Heart right ventricle (tissue), 16 donors: ENCODE measurements at regions of chr4 and their contacts with region 1.

Region 1: GRCh38 chr4:173538148-173538908 is 8.3 kb upstream of the HAND2 start:
- DNase-seq: peak; percentile 54 to 74
- ATAC-seq: peak; percentile 76 to 87 (median 80)
- H3K4me3 ChIP-seq: peak overlapping the region; percentile 17 to 82 (median 54)
- H3K27ac ChIP-seq: peak overlapping the region; percentile 72 to 97 (median 90)
- H3K4me1 ChIP-seq: peaks cover 0 to 61% (median 13%) of the 10 kb centered on the region in 9 donors
- H3K27me3 ChIP-seq: peaks cover 0 to 99% (median 48%) of the 10 kb centered on the region in 7 donors
- CTCF ChIP-seq: no peak

Region 2: DNA sequence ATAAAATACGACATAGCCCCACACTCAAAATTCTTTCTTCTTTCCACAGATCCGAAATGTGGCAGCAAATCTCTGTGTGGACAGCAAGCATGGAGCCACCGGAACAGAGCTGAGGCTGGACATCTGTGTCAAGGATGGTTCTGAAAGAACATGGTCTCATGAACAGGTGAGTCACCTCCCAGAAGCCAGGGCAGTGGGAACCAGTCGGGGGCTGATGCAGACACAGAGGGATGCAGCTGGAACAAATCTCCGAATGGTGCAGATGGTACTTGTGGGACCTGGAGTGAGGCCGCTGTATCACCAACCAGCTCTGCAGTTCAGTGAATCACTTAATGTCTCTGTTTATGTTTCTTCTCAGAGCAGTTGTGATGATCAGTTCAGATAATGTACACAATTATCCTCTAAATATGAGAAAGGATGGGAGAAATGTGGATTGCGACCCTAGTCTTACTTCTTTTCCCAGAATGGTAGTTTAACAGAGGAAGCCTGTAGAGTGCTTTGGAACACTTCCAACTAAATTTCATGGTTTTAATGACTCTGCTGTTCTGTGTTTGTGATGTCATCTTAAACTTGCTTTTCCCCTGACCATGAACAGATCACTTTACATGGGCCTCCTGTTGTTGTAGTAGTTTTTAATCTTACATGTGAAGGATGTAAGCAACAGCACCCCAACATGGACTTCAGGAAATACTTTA is 529.1 kb before region 1 on chr4:
- intact Hi-C with region 1: no loop called
- DNase-seq: no peak
- ATAC-seq: no peak
- H3K4me3 ChIP-seq: no peak overlapping the region
- H3K27ac ChIP-seq: no peak overlapping the region
- H3K4me1 ChIP-seq: peaks cover 0 to 8% (median 0%) of the 10 kb centered on the region in 9 donors
- H3K27me3 ChIP-seq: no peaks in the 10 kb centered on the region
- CTCF ChIP-seq: no peak

Region 3: DNA sequence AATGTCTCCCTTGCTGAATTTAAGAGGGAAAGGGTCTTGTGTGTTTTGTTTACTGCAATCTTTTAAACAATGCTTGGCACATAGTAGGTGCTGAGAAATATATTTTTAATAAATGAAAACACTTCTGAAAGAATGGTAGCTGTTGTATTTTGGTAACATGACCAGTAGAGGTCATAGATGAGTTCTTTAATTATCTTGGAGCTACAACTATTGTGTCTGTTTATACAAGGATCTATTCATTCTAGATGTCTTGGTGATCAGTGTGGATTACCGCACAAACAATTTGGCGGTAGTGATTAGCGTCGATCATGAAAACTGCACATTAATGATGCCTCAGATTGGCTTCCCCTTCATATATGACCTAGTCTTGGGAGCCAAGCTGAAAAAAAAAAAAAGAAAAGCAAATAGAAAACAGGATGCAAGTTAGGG is 118.0 kb before region 1 on chr4:
- intact Hi-C with region 1: no loop called
- DNase-seq: no peak
- ATAC-seq: peak in 3 of 8 donors; percentile 21 to 56 (median 50)
- H3K4me3 ChIP-seq: peak overlapping the region in 1 of 10 donors; percentile 21
- H3K27ac ChIP-seq: no peak overlapping the region
- H3K4me1 ChIP-seq: peaks cover 0 to 42% (median 0%) of the 10 kb centered on the region in 9 donors
- H3K27me3 ChIP-seq: no peaks in the 10 kb centered on the region
- CTCF ChIP-seq: peak in 8 of 9 donors; percentile 42 to 69 (median 60)

Region 4: GRCh38 chr4:173478201-173478912 is 60.0 kb before region 1 on chr4:
- intact Hi-C with region 1: no loop called
- DNase-seq: no peak
- ATAC-seq: peak in 3 of 8 donors; percentile 46 to 62 (median 56)
- H3K4me3 ChIP-seq: no peak overlapping the region
- H3K27ac ChIP-seq: peak overlapping the region in 2 of 10 donors; percentile 7 to 28
- H3K4me1 ChIP-seq: no peaks in the 10 kb centered on the region
- H3K27me3 ChIP-seq: no peaks in the 10 kb centered on the region
- CTCF ChIP-seq: no peak

Region 5: DNA sequence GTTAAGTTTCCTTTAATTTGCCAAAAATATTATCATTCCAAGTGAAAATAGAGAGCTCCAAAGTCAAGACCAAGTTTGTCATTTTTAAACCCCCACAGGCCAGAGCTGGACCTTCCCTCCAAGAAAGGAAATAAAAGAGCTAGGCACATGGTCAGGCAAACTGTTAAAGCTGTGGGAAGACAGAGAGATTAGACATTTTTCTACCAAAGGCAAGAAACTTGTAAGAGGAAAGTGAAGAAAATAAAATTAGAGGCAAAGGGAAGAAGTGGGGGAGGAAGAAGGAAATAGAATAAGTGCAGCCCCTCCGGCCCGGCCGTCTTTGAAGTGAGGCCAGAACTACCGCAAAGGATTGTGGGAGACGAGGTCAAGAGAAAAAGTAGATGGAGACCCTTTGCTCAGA is 39.6 kb after region 1 on chr4:
- intact Hi-C with region 1: loop called in 1 of 10 experiments (anchors 5 kb)
- DNase-seq: no peak
- ATAC-seq: no peak
- H3K4me3 ChIP-seq: no peak overlapping the region
- H3K27ac ChIP-seq: peak overlapping the region in 5 of 10 donors; percentile 7 to 51 (median 33)
- H3K4me1 ChIP-seq: peaks cover 0 to 32% (median 1%) of the 10 kb centered on the region in 9 donors
- H3K27me3 ChIP-seq: no peaks in the 10 kb centered on the region
- CTCF ChIP-seq: no peak

Region 6: DNA sequence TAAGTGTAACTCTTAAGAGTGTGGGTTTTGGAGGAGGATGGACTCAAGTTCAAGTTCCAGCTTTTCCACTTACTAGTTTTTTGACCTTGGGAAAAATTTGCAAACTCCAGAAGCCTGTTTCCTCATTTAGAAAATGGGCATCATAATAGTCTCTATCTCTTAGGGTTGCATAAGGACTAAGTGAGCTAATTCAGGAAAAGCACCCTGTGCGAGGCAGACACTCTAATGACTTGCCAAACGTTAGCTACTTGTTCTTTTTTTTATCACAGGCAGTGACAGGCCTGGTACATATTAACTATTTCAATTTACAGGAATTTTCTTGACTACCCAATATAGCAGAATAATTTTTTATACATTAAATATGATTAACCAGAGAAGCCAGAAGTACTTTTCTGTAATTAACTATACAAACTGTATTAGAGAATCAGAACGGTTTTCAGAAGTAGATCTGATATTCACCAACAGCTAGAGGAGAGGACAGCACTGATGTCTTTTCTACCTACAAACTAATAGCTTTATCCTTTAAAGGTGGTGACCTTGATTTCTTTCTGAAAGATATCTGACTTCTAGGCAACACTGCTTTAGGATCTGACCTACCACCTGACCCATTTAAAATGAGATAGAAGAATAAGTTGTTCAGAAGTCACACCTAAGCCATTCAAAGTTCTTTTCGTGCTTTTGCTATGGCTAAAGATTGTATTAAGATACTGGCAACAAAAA is 131.3 kb after region 1 on chr4:
- intact Hi-C with region 1: loop called in 2 of 10 experiments (anchors 5 to 10 kb)
- DNase-seq: peak in 1 of 2 donors; percentile 38
- ATAC-seq: peak; percentile 88 to 99 (median 97)
- H3K4me3 ChIP-seq: no peak overlapping the region
- H3K27ac ChIP-seq: peak overlapping the region; percentile 47 to 89 (median 72)
- H3K4me1 ChIP-seq: peaks cover 0 to 9% (median 0%) of the 10 kb centered on the region in 9 donors
- H3K27me3 ChIP-seq: no peaks in the 10 kb centered on the region
- CTCF ChIP-seq: no peak

Region 7: DNA sequence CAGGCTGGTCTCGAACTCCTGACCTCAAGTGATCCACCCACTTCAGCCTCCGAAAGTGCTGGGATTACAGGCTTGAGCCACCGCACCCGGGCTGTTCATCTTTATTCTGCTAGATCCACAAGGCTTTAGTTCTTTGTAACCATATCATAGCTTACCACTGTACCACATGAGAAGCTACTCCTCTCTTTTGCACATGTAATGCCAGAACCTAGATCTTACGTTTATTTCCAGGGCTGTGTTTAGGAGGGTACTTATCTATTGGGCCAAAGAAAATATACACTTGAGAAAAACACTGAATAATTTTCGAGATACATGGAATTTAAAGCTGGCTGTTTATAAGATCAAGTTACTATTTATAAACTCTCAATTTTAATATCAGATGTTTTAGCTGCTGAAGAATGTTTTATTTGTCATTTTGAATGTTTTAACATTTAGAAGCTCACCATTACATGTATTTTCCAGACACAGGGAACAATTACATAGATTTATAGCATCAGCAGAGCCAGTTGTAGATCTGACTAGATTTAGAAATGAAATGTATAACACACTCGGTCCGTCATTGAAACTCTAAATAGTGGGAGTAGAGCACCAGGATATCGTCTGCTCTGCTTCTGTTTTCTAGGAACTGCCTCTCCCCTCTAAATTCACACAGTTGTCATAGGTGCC is 147.0 kb after region 1 on chr4:
- intact Hi-C with region 1: loop called in 4 of 10 experiments (anchors 5 to 10 kb)
- DNase-seq: no peak
- ATAC-seq: no peak
- H3K4me3 ChIP-seq: no peak overlapping the region
- H3K27ac ChIP-seq: peak overlapping the region; percentile 43 to 89 (median 78)
- H3K4me1 ChIP-seq: peaks cover 0 to 39% (median 9%) of the 10 kb centered on the region in 9 donors
- H3K27me3 ChIP-seq: no peaks in the 10 kb centered on the region
- CTCF ChIP-seq: no peak

Region 8: GRCh38 chr4:173698557-173699262 is 160.4 kb after region 1 on chr4:
- intact Hi-C with region 1: loop called in 1 of 10 experiments (anchors 5 kb)
- DNase-seq: peak; percentile 54 to 62
- ATAC-seq: peak; percentile 53 to 96 (median 92)
- H3K4me3 ChIP-seq: peak overlapping the region in 6 of 10 donors; percentile 13 to 37 (median 30)
- H3K27ac ChIP-seq: peak overlapping the region; percentile 36 to 86 (median 66)
- H3K4me1 ChIP-seq: peaks cover 0 to 36% (median 0%) of the 10 kb centered on the region in 9 donors
- H3K27me3 ChIP-seq: no peaks in the 10 kb centered on the region
- CTCF ChIP-seq: no peak

Region 9: DNA sequence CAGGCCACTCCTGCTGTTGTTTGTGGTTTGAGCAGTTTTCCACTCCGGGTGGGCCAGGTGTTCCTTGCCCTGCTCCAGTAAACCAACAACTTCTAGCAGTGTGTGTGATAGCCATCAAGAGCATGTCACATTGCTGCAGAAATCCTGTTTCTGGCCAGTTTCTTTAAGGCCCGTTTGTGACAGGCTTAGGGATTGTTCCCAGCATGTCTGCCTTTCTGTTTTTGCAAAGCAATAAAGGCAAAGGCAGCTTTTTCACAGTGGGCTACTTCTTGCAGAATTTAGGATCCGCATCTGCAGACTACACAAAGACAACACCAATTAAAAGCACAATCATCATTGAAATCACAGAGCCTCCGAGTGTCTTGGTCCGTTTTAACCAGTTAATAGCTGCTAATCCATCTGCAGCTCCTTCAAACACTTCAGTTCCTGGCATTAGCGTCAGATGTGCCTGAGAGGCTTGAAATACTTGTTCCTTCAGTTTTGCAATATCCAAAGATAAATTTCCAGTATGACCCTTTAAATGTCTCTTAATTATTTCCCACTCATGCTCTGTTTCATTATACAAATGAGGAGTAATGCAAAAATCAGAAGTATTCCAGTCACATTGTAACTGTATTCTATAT is 1444.9 kb after region 1 on chr4:
- intact Hi-C with region 1: no loop called
- DNase-seq: no peak
- ATAC-seq: no peak
- H3K4me3 ChIP-seq: no peak overlapping the region
- H3K27ac ChIP-seq: no peak overlapping the region
- H3K4me1 ChIP-seq: no peaks in the 10 kb centered on the region
- H3K27me3 ChIP-seq: no peaks in the 10 kb centered on the region
- CTCF ChIP-seq: no peak